Calu3 (cell line): ENCODE measurements at regions of chr2 and their contacts with region 1.

Region 1: DNA sequence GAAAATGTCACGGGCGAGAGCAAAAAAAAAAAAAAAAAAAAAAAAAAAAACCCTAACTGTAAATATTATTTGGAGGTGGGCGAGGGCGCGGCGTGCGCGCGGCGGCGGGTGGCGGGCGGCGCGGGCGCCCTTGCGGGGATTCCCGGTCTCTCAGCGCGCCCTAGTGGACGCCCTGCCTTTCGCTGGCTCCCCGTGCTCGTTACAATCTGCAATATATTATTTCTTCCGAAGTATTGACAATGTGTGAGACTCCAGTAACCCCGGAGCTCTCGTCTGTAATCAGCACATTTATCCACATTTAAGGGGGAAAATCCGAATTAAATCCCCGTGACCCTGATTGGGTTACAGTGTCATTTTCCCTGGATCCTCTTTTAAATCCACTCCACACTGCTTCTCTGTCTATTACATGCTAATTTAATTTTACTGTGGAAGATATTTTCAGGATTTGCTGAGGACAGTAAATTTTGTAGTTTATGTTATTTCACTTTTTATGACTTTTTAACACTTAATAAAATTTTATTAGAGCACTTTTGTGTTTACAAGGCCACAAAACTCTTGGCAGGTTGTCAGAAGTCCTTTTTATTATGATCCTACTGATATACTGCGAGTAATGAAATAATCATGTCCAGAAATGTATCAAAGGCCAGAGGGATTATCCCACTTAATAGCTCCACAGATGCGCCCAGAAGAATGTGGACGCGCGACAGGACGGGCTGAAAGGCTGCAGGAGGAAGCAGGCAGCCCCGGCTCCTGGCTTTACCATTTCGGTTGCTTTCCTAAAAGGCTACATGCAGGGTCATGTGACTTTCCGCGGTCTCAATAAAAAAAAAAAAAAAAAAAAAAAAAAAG is 369.1 kb downstream of the MTX2 start:
- DNase-seq: peak; percentile 87
- H3K4me3 Mint-ChIP-seq: peak overlapping the region; percentile 78
- H3K27ac Mint-ChIP-seq: peak overlapping the region; percentile 47
- H3K4me1 Mint-ChIP-seq: no peaks in the 10 kb centered on the region
- H3K27me3 Mint-ChIP-seq: no peaks in the 10 kb centered on the region
- CTCF ChIP-seq: peak; percentile 91

Region 2: GRCh38 chr2:176157499-176158185 is 480.7 kb before region 1 on chr2:
- CTCF ChIA-PET with region 1: no interaction called
- intact Hi-C with region 1: no loop called
- DNase-seq: no peak
- H3K4me3 Mint-ChIP-seq: no peak overlapping the region
- H3K27ac Mint-ChIP-seq: no peak overlapping the region
- H3K4me1 Mint-ChIP-seq: no peaks in the 10 kb centered on the region
- H3K27me3 Mint-ChIP-seq: peaks cover 11% of the 10 kb centered on the region
- CTCF ChIP-seq: no peak

Region 3: GRCh38 chr2:176270100-176270750 is 368.2 kb before region 1 on chr2:
- CTCF ChIA-PET with region 1: no interaction called
- intact Hi-C with region 1: no loop called
- DNase-seq: no peak
- H3K4me3 Mint-ChIP-seq: peak overlapping the region; percentile 97
- H3K27ac Mint-ChIP-seq: peak overlapping the region; percentile 81
- H3K4me1 Mint-ChIP-seq: peaks cover 13% of the 10 kb centered on the region
- H3K27me3 Mint-ChIP-seq: no peaks in the 10 kb centered on the region
- CTCF ChIP-seq: no peak

Region 4: DNA sequence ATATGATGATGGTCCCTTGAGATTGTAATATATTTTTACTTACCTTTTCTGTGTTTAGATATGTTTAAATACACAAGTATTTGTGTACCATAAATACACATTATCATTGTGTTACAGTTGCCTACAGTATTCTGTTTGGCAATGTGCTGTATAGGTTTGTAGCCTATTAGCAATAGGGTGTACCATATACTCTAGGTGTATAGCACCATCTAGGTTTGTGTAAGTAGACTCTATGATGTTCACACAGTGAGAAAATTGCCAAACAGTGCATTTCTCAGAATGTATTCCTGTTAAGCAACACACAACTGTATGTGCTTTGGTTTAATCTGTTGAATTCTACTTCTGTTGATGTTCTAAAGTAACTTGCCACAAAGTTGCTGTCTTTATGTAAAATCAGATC is 304.7 kb before region 1 on chr2:
- CTCF ChIA-PET with region 1: no interaction called
- intact Hi-C with region 1: loop called (anchors 5 kb)
- DNase-seq: no peak
- H3K4me3 Mint-ChIP-seq: no peak overlapping the region
- H3K27ac Mint-ChIP-seq: no peak overlapping the region
- H3K4me1 Mint-ChIP-seq: no peaks in the 10 kb centered on the region
- H3K27me3 Mint-ChIP-seq: no peaks in the 10 kb centered on the region
- CTCF ChIP-seq: no peak

Region 5: GRCh38 chr2:176454893-176455811 is 183.2 kb before region 1 on chr2:
- CTCF ChIA-PET with region 1: interaction called, 18 read pairs
- intact Hi-C with region 1: loop called (anchors 1 kb)
- DNase-seq: peak; percentile 90
- H3K4me3 Mint-ChIP-seq: no peak overlapping the region
- H3K27ac Mint-ChIP-seq: no peak overlapping the region
- H3K4me1 Mint-ChIP-seq: no peaks in the 10 kb centered on the region
- H3K27me3 Mint-ChIP-seq: no peaks in the 10 kb centered on the region
- CTCF ChIP-seq: peak; percentile 94

Region 6: DNA sequence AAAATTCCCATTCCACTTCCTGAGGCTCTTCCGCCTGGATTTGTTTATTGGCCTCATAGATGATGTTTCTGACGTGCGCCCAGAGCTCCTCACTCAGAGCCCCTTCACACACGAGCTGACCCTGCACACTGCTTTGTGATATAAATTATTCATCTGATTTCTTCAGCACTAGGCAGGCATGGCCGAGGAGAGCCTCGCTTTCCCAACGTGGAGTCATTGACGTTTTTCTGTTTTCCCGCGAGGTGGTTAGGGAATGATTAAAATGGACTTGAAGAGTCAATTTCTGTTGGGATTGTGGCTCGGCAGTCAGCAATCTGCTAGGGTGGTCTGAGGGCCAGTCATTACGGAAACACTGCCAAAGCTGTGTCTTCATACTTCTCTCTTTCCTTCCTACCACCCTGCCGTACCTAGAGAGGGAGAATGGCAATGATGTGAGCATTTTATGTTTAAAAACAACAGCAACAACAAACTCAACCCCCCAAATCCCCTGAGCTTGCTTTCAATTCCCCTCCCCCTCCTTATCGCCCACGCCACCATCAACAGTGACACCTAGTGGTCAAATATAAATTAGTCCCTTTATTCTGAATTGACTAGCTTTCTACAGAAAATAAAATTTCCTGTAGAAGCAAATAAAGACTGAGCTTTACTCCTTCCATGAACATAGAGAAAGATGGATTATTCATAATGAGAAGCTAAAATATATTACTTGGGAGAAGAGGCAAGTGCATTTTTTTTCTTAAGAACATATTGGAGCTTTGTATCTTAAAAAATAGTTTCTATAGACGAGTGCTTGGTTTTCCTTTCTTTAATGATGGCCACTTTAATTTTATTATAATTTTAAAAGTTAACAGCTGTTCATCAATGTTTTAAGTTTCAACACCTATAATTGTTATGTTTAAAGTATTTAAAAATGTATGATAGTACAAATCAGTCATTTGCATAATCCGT is 84.0 kb before region 1 on chr2:
- CTCF ChIA-PET with region 1: interaction called, 15 read pairs
- intact Hi-C with region 1: loop called (anchors 2 kb)
- DNase-seq: peak; percentile 49
- H3K4me3 Mint-ChIP-seq: peak overlapping the region; percentile 73
- H3K27ac Mint-ChIP-seq: peak overlapping the region; percentile 64
- H3K4me1 Mint-ChIP-seq: peaks cover 17% of the 10 kb centered on the region
- H3K27me3 Mint-ChIP-seq: no peaks in the 10 kb centered on the region
- CTCF ChIP-seq: peak; percentile 48

Region 7: DNA sequence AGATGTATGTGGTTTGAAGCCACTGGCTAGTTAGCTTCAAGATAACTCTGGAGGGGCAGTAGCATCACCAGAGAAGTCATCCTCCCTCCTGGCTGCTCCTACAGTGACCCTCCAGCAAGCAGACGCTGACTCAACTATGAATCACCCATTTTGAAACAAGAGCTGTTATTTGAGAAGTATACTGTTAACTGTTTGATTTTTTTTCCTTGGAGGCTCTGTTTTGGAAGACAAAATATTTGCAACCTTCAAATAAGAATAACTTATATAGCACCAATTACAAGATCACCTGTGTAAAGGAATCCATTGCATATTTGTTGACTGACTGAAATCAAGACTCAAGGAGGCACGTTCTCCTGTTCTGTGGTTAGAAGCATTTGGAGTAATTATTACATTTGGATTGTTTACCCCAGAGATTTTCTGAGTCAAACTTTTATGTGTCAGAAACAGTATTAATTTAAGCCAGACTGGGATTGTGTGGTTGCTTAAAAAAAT is 55.4 kb before region 1 on chr2:
- CTCF ChIA-PET with region 1: no interaction called
- intact Hi-C with region 1: loop called (anchors 5 kb)
- DNase-seq: peak; percentile 64
- H3K4me3 Mint-ChIP-seq: peak overlapping the region; percentile 62
- H3K27ac Mint-ChIP-seq: peak overlapping the region; percentile 31
- H3K4me1 Mint-ChIP-seq: peaks cover 45% of the 10 kb centered on the region
- H3K27me3 Mint-ChIP-seq: no peaks in the 10 kb centered on the region
- CTCF ChIP-seq: no peak

Region 8: GRCh38 chr2:176658708-176659107 is 20.3 kb after region 1 on chr2:
- CTCF ChIA-PET with region 1: no interaction called
- intact Hi-C with region 1: no loop called
- DNase-seq: no peak
- H3K4me3 Mint-ChIP-seq: no peak overlapping the region
- H3K27ac Mint-ChIP-seq: no peak overlapping the region
- H3K4me1 Mint-ChIP-seq: no peaks in the 10 kb centered on the region
- H3K27me3 Mint-ChIP-seq: peaks cover 38% of the 10 kb centered on the region
- CTCF ChIP-seq: no peak